ENCODE measurements at regions of chr1 and their contacts with region 1.

Region 1: GRCh38 chr1:117632269-117633067 is 26.6 kb downstream of the TENT5C start:
- DNase-seq: no peak
- ATAC-seq: no peak
- H3K4me3 ChIP-seq: no peak overlapping the region
- H3K4me3 Mint-ChIP-seq: no peak overlapping the region
- H3K27ac ChIP-seq: no peak overlapping the region
- H3K27ac Mint-ChIP-seq: peak overlapping the region in 1 of 2 donors; percentile 41
- H3K4me1 ChIP-seq: peaks cover 0 to 11% of the 10 kb centered on the region in 2 experiments
- H3K4me1 Mint-ChIP-seq: peaks cover 33 to 48% (median 35%) of the 10 kb centered on the region in 3 donors
- H3K27me3 ChIP-seq: no peaks in the 10 kb centered on the region
- H3K27me3 Mint-ChIP-seq: peaks cover 0 to 15% of the 10 kb centered on the region in 2 donors

Region 2: GRCh38 chr1:117612517-117613248 is 19.8 kb before region 1 on chr1:
- CTCF ChIA-PET with region 1: interaction called in 1 of 2 experiments, 4 read pairs
- POLR2A ChIA-PET with region 1: interaction called, 3 to 10 read pairs
- DNase-seq: no peak
- ATAC-seq: no peak
- H3K4me3 ChIP-seq: no peak overlapping the region
- H3K4me3 Mint-ChIP-seq: no peak overlapping the region
- H3K27ac ChIP-seq: peak overlapping the region; percentile 3
- H3K27ac Mint-ChIP-seq: no peak overlapping the region
- H3K4me1 ChIP-seq: peaks cover 1 to 66% of the 10 kb centered on the region in 2 experiments
- H3K4me1 Mint-ChIP-seq: peaks cover 59 to 92% (median 87%) of the 10 kb centered on the region in 3 donors
- H3K27me3 ChIP-seq: no peaks in the 10 kb centered on the region
- H3K27me3 Mint-ChIP-seq: no peaks in the 10 kb centered on the region